Common myeloid progenitor, CD34-positive (primary cell): ENCODE measurements at regions of chr21 and their contacts with region 1.

Region 1: DNA sequence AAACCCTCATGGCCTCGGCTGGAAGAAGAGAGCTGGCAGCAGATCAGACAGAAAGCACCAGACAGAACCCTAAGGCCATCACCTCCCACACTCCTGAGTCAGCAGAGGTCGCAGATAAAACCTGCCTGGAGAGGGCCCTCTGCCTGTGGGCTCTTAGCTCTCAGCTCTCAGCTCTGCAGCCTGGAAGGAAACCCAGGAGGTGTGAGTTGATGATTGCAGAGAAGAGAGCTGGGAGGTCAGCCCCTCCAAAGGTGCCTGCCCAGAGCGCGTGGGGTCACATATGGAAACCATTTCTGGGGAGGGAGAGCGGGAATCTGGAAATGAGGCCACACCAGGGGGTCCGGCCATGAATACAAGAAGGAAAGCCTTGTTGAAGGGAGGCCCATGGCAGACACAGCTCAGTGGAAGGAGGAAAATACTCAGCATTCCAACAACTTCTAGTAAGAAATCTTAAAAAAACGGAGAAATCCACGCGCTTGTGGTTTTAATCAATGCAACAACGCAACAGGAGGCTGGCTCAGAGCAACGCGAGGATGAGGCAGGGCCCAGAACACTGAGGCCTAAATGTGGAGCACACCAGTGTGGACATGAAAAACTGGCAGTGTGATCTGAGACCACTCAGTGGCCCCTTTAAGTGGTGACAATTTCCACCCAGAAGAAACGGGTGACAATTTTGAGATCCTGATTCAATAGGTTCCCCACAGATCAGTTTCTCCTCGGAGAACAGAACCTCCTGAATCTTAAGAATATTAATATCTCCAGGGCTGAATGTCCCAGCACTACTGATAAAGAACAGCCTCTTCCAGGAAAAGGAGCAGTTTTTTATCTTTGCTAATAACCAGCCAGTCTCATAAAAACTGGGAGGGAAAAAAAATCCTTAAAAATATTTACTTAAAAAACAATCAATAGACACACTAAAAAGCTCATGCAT is 45.7 kb downstream of the PSMG1 start:
- DNase-seq: peak in 1 of 3 donors; percentile 28
- H3K4me3 ChIP-seq: no peak overlapping the region
- H3K27ac ChIP-seq: no peak overlapping the region
- H3K4me1 ChIP-seq: peaks cover 0 to 29% (median 5%) of the 10 kb centered on the region in 4 experiments
- H3K27me3 ChIP-seq: no peaks in the 10 kb centered on the region

Region 2: DNA sequence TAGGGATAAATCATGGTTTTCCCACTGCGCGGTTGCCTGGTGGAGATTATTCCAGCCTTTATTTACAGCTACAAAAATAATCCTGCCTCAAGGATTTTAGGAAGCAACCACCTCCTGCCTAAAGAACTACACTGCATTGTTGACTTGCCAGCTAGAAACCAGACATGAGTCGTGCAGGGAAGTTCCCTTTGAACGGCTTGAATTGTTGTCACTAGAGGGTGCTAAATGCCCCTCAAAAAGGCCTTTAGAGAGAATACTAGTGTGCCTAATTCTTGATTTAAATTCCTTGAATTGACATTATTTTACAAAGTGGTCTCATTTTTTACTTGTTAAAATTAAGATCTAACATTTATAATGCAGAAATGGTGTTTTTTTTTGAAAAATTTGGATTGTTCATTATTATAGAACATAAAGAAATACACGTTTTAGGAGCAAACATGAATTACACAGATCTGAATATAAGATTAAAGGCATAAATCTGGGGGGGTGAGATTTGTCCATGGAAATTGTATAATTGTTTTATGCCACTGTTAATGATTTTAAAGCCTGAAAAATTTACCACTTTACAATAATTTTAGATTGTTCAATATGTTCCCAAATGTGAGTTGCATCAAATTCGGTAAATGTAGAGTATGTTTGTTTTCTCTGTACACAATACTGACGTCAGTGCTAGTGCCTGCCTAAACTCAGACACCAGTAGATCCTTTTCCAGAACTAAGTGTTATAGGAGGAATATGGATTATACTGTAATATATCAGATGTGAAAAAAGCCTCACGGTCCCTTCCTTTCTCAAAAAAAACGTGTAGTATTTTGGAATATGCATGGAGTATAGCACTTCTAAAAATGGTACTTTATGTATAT is 631.6 kb before region 1 on chr21:
- CTCF ChIA-PET with region 1: interaction called, 35 read pairs
- POLR2A ChIA-PET with region 1: no interaction called
- DNase-seq: peak; percentile 78 to 90 (median 89)
- H3K4me3 ChIP-seq: peak overlapping the region in 1 of 7 experiments; percentile 62
- H3K27ac ChIP-seq: peak overlapping the region in 1 of 2 experiments; percentile 59
- H3K4me1 ChIP-seq: peaks cover 6 to 52% (median 26%) of the 10 kb centered on the region in 4 experiments
- H3K27me3 ChIP-seq: no peaks in the 10 kb centered on the region

Region 3: DNA sequence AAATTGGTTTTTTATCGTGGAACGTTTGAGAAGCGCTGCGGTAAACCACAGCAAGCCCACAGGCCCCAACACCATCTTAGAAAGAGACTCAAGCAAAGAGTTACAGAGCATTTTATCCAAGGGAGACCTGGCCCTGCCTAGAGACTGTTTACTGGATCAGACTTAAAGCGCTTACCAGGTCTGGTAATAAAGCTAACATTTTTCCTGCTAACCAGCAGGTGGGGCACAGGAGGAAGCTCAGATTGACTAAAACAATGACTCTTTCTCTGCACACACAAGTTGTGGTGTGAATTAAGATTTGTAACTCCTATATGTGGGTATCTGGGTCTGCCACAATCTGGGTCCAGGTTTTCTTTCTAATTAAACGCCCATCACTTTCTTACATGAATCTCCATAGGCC is 468.3 kb before region 1 on chr21:
- CTCF ChIA-PET with region 1: interaction called, 12 read pairs
- POLR2A ChIA-PET with region 1: no interaction called
- DNase-seq: peak; percentile 46 to 80 (median 78)
- H3K4me3 ChIP-seq: no peak overlapping the region
- H3K27ac ChIP-seq: no peak overlapping the region
- H3K4me1 ChIP-seq: peaks cover 0 to 5% (median 0%) of the 10 kb centered on the region in 4 experiments
- H3K27me3 ChIP-seq: peaks cover 0 to 3% (median 0%) of the 10 kb centered on the region in 5 experiments

Region 4: DNA sequence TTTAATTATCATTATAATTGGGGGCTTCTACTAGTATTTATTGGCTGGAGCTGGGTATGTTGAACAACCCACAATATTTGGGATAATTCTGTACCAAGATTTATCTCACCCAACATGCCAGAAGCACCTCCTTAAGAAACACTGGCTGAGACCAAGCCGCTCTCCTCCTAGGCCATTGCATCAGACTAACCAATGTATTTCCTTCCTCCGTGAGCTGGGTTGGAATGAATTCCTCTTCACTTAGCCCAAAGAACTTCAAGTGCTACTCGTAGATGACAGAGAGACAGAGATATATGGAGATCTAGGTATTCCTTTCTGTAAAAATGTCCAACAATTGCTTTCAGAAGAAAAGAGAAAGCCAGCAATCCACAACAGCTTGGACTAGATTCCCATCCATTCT is 419.0 kb before region 1 on chr21:
- CTCF ChIA-PET with region 1: interaction called, 10 read pairs
- POLR2A ChIA-PET with region 1: no interaction called
- DNase-seq: no peak
- H3K4me3 ChIP-seq: no peak overlapping the region
- H3K27ac ChIP-seq: no peak overlapping the region
- H3K4me1 ChIP-seq: peaks cover 0 to 13% (median 8%) of the 10 kb centered on the region in 4 experiments
- H3K27me3 ChIP-seq: no peaks in the 10 kb centered on the region

Region 5: GRCh38 chr21:39176271-39176709 is 38.8 kb after region 1 on chr21:
- CTCF ChIA-PET with region 1: interaction called, 12 read pairs
- POLR2A ChIA-PET with region 1: no interaction called
- DNase-seq: no peak
- H3K4me3 ChIP-seq: no peak overlapping the region
- H3K27ac ChIP-seq: no peak overlapping the region
- H3K4me1 ChIP-seq: peaks cover 0 to 27% (median 21%) of the 10 kb centered on the region in 4 experiments
- H3K27me3 ChIP-seq: no peaks in the 10 kb centered on the region